Naive thymus-derived CD8-positive, alpha-beta T cell (primary cell): ENCODE measurements at regions of chr22 and their contacts with region 1.

Region 1: GRCh38 chr22:41589391-41590241 is at the start of gene PMM1:
- DNase-seq: peak; percentile 98 to 100 (median 100)
- ATAC-seq: peak; percentile 94 to 97
- H3K4me3 Mint-ChIP-seq: peak within 1 kb of the TSS; percentile 84 to 96 (median 94)
- H3K27ac Mint-ChIP-seq: peak within 1 kb of the TSS; percentile 28 to 95 (median 89)
- H3K4me1 Mint-ChIP-seq: peaks cover 5 to 30% (median 15%) of the 10 kb centered on the region in 4 donors
- H3K27me3 Mint-ChIP-seq: no peaks in the 10 kb centered on the region
- polyA plus RNA-seq, gene PMM1: 29.9 to 32.8 (median 32.4) TPM

Region 2: DNA sequence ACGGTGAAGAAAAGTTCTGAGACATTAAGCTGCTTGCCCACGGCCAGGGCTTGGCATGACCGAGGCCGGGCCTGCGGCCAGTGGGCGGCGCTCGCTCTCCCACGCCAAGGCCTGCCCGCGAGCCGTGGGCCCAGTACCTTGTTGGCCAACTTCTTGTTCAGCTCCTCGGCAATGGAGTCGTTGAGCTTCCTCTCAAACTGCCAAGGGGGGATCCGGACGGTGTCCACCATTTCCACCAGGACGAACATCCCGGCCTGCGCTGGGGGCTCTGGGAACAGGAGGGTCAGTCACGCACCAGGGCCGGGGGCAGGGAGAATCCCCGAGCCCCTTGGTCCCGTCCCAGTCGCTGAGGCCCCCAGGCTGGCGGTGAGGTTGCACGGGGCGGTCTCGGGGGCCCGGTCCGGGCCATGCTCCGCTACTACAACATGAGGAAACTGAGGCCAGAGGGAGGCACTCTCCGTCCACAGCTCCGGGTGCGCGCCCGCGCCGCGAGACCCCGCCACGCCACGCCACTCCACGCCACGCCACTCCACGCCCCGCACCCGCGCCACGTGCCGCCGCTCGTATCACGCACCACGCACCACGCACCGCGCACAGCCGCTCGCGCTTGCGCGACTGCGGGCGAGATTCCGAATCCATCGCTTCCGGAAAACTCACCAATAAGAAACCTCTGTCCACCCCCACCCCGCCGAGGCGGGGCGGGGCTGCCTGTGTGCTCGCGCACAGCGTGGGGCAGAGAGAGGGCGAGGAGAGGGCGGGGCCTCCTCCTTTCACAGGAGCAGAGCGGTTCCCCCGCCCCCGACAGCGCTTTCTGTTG is 45.6 kb before region 1 on chr22 and contains the start of gene POLR3H:
- POLR2A ChIA-PET with region 1: interaction called, 10 read pairs
- DNase-seq: peak; percentile 89 to 98 (median 95)
- ATAC-seq: peak; percentile 94 to 97
- H3K4me3 Mint-ChIP-seq: peak within 1 kb of the TSS; percentile 91 to 100 (median 98)
- H3K27ac Mint-ChIP-seq: peak within 1 kb of the TSS; percentile 83 to 99 (median 96)
- H3K4me1 Mint-ChIP-seq: peaks cover 21 to 57% (median 51%) of the 10 kb centered on the region in 4 donors
- H3K27me3 Mint-ChIP-seq: no peaks in the 10 kb centered on the region
- polyA plus RNA-seq, gene POLR3H: 24.7 to 30.9 (median 27.6) TPM

Region 3: GRCh38 chr22:41621099-41621910 is 31.7 kb after region 1 on chr22 and contains the start of gene XRCC6:
- POLR2A ChIA-PET with region 1: interaction called, 26 read pairs
- DNase-seq: peak; percentile 98 to 100 (median 100)
- ATAC-seq: peak; percentile 87 to 88
- H3K4me3 Mint-ChIP-seq: peak within 1 kb of the TSS; percentile 89 to 100 (median 97)
- H3K27ac Mint-ChIP-seq: peak within 1 kb of the TSS; percentile 95 to 100 (median 100)
- H3K4me1 Mint-ChIP-seq: peaks cover 16 to 57% (median 48%) of the 10 kb centered on the region in 4 donors
- H3K27me3 Mint-ChIP-seq: no peaks in the 10 kb centered on the region
- polyA plus RNA-seq, gene XRCC6: 436 to 513 (median 454) TPM